HEK293T (cell line): ENCODE measurements at regions of chr1 and their contacts with region 1.

Region 1: GRCh38 chr1:48498096-48498791 is 26.2 kb upstream of the SPATA6 start:
- DNase-seq: peak; percentile 72

Region 2: GRCh38 chr1:48471691-48472576 is 26.3 kb before region 1 on chr1 and contains the start of gene SPATA6:
- CTCF ChIA-PET with region 1: interaction called, 7 read pairs
- POLR2A ChIA-PET with region 1: interaction called, 20 read pairs
- DNase-seq: peak; percentile 98